ENCODE measurements at regions of chr19 and their contacts with region 1.

Region 1: DNA sequence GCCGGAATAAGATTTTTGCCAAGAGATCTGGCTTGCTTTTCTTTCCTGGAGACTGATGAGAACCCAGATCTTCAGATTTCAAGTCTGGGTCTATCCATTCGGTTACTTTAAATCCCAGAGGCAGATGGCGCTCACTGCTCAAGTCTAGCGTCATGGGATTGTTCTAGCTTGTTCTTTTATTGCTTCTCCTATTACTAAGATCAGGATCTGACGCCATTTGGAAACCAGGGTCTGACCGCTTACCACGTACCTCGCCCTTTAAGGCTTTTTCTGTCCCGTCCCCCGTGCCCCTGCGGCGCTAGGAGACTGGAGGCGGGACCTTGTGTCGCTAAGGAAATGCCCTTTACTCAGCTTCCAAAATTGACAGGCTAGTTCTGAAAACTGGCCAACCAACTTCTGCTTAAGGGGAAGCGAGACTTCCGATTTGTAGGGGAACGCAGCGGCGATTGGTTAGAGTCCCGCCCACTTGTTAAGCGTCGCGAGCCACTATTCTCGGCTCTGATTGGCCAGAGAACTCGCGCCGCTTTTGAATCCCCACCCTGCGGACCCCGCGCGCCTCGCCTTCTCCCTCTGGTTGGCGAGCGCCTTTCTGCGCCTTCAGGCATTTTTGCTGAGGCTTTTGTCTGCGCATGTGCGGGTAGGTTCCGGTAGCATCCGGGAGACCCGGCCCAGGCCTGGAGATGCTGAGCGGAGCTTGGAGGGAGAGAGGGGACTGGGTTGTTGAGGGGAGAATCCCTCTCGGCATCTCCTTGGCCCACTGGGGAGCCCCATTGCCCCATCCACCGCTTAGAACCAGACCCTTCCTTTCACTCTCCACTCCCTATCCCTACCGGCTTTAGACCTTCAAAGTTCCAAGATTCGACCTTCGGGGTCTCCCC is 3.8 kb upstream of the C19orf84 start:
- DNase-seq: peak; percentile 99
- ATAC-seq: peak; percentile 86
- H3K4me3 Mint-ChIP-seq: peak overlapping the region; percentile 94
- H3K27ac Mint-ChIP-seq: peak overlapping the region; percentile 100
- H3K4me1 Mint-ChIP-seq: peaks cover 47% of the 10 kb centered on the region
- H3K27me3 Mint-ChIP-seq: no peaks in the 10 kb centered on the region

Region 2: DNA sequence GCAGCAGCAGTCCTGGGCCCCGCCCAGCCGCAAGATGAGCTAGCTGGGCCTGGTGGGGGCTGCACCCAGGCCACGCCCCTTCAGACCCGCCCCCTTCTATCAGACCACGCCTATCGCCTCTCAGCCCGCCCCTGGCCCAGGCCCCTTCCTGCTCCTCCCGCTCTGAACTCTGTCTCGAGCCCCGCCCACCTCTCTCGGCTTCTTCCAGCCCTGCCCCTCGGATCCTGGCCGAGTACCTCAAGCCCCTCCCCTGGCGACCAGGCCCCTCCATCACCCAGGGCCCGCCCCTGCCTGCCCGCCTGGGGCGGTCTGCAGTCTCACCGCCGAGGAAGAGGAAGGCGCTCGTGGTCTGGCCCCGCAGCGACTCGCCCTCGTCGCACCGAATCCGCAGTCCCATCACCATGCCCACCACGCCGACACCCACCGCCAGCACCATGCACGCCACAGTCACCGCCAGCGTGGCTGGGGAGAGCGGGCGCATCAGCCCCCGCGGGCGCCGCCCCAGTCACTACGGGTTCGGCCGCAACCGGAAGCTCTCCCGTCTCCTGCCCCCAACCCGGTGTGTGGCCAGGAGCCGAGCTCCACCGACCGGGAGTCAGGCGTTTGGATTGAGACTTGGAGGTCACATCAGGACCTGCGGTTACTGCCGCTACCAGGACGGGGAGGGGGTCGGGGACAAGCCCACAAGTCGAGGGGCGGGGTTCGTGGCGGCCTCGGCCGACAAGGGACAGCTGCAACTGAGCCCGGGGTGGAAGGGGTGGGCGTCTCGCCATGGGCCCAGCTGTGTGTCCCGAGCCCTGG is 26.4 kb before region 1 on chr19:
- CTCF ChIA-PET with region 1: interaction called, 97 read pairs
- DNase-seq: peak; percentile 100
- ATAC-seq: peak; percentile 76
- H3K4me3 Mint-ChIP-seq: peak overlapping the region; percentile 97
- H3K27ac Mint-ChIP-seq: peak overlapping the region; percentile 98
- H3K4me1 Mint-ChIP-seq: peaks cover 42% of the 10 kb centered on the region
- H3K27me3 Mint-ChIP-seq: no peaks in the 10 kb centered on the region

Region 3: GRCh38 chr19:51380379-51380778 is 13.8 kb before region 1 on chr19:
- CTCF ChIA-PET with region 1: interaction called, 32 read pairs
- DNase-seq: no peak
- ATAC-seq: no peak
- H3K4me3 Mint-ChIP-seq: no peak overlapping the region
- H3K27ac Mint-ChIP-seq: peak overlapping the region; percentile 43
- H3K4me1 Mint-ChIP-seq: peaks cover 37% of the 10 kb centered on the region
- H3K27me3 Mint-ChIP-seq: no peaks in the 10 kb centered on the region

Region 4: GRCh38 chr19:51422053-51422448 is 27.9 kb after region 1 on chr19:
- CTCF ChIA-PET with region 1: interaction called, 17 read pairs
- DNase-seq: peak; percentile 90
- ATAC-seq: peak; percentile 83
- H3K4me3 Mint-ChIP-seq: no peak overlapping the region
- H3K27ac Mint-ChIP-seq: no peak overlapping the region
- H3K4me1 Mint-ChIP-seq: peaks cover 17% of the 10 kb centered on the region
- H3K27me3 Mint-ChIP-seq: peaks cover 18% of the 10 kb centered on the region

Region 5: GRCh38 chr19:51570962-51571575 is 176.9 kb after region 1 on chr19 and contains the start of gene ZNF175:
- CTCF ChIA-PET with region 1: no interaction called
- DNase-seq: peak; percentile 85
- ATAC-seq: peak; percentile 96
- H3K4me3 Mint-ChIP-seq: peak within 1 kb of the TSS; percentile 79
- H3K27ac Mint-ChIP-seq: peak within 1 kb of the TSS; percentile 50
- H3K4me1 Mint-ChIP-seq: peaks cover 28% of the 10 kb centered on the region
- H3K27me3 Mint-ChIP-seq: peaks cover 16% of the 10 kb centered on the region
- total RNA-seq, gene ZNF175: 8.3 to 10.1 TPM